BJ (cell line): ENCODE measurements at regions of chr22 and their contacts with region 1.

Region 1: GRCh38 chr22:37303821-37304274 is 21.5 kb downstream of the CYTH4 start:
- DNase-seq: peak; percentile 58
- H3K4me3 ChIP-seq: no peak overlapping the region
- H3K27me3 ChIP-seq: no peaks in the 10 kb centered on the region
- CTCF ChIP-seq: no peak

Region 2: GRCh38 chr22:37273126-37273845 is 30.6 kb before region 1 on chr22:
- CTCF ChIA-PET with region 1: no interaction called
- POLR2A ChIA-PET with region 1: no interaction called
- DNase-seq: peak; percentile 52
- H3K4me3 ChIP-seq: no peak overlapping the region
- H3K27me3 ChIP-seq: no peaks in the 10 kb centered on the region
- CTCF ChIP-seq: no peak

Region 3: DNA sequence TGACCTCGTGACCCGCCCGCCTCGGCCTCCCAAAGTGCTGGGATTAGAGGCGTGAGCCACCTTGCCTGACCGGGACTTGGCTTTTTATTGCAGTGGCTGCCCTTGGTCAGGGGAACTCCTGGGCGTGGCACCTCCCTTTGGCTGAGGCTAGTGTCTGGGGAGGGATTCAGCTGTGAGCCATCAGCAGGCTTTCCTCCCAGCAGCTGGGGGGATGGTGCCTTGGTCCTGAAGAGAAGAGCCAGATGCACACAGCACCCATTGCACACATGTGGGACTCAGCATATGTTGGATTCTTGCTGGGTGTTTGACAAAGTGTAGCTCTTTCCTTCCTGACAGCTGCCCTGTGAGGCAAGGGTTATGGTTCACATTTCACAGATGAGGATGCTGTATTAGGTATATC is 13.1 kb before region 1 on chr22:
- CTCF ChIA-PET with region 1: interaction called, 12 read pairs
- POLR2A ChIA-PET with region 1: no interaction called
- DNase-seq: no peak
- H3K4me3 ChIP-seq: no peak overlapping the region
- H3K27me3 ChIP-seq: peaks cover 3% of the 10 kb centered on the region
- CTCF ChIP-seq: no peak